Naive thymus-derived CD4-positive, alpha-beta T cell (primary cell): ENCODE measurements at regions of chr16 and their contacts with region 1.

Region 1: GRCh38 chr16:68229431-68230198 is 6.3 kb downstream of the ESRP2 start:
- DNase-seq: peak in 6 of 9 donors; percentile 44 to 64 (median 58)
- ATAC-seq: peak; percentile 61
- H3K4me3 ChIP-seq: no peak overlapping the region
- H3K4me3 Mint-ChIP-seq: peak overlapping the region in 1 of 10 donors; percentile 29
- H3K27ac ChIP-seq: no peak overlapping the region
- H3K27ac Mint-ChIP-seq: peak overlapping the region; percentile 63 to 90 (median 77)
- H3K4me1 ChIP-seq: peaks cover 0 to 21% of the 10 kb centered on the region in 2 donors
- H3K4me1 Mint-ChIP-seq: peaks cover 18 to 53% (median 47%) of the 10 kb centered on the region in 7 donors
- H3K27me3 ChIP-seq: no peaks in the 10 kb centered on the region
- H3K27me3 Mint-ChIP-seq: no peaks in the 10 kb centered on the region

Region 2: DNA sequence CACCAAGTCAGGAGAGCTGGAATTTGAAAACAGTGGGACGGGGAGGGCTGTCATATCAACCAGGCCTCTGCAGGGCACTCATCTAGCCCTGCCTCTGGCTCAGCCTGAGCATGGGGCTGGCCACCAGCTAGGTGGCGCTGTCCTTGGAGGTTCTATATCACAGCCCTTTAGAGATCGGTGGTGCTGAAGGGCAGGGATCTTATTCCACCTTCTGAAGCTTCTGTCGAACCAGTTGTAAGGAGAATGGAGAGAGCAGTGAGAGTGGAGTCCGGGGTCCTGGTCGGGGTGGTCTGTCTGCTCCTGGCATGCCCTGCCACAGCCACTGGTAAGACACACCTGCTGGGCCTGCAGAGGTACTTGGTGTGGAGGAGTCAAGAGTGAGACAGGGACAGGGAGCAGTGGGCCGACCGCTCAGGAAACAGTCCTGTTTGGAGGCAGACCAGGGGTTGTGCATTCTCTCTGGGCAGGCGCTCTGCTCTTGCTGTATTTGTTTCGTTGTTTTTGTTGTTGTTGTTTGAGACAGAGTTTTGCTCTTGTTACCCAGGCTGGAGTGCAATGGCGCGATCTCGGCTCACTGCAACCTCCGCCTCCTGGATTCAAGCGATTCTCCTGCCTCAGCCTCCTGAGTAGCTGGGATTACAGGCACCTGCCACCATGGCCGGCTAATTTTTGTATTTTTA is 1268.4 kb before region 1 on chr16 and contains the start of gene CES3:
- CTCF ChIA-PET with region 1: no interaction called
- POLR2A ChIA-PET with region 1: no interaction called
- intact Hi-C with region 1: no loop called
- DNase-seq: peak in 8 of 9 donors; percentile 23 to 71 (median 34)
- ATAC-seq: peak; percentile 90
- H3K4me3 ChIP-seq: no peak within 1 kb of the TSS
- H3K4me3 Mint-ChIP-seq: peak within 1 kb of the TSS in 1 of 10 donors; percentile 92
- H3K27ac ChIP-seq: no peak within 1 kb of the TSS
- H3K27ac Mint-ChIP-seq: peak within 1 kb of the TSS in 2 of 9 donors; percentile 68 to 91
- H3K4me1 ChIP-seq: no peaks in the 10 kb centered on the region
- H3K4me1 Mint-ChIP-seq: peaks cover 10 to 33% (median 17%) of the 10 kb centered on the region in 7 donors
- H3K27me3 ChIP-seq: no peaks in the 10 kb centered on the region
- H3K27me3 Mint-ChIP-seq: peaks cover 0 to 5% (median 0%) of the 10 kb centered on the region in 5 donors
- total RNA-seq, gene CES3: 0.32 to 11.5 (median 0.77) TPM in 4 of 5 experiments, not detected in the other

Region 3: GRCh38 chr16:67406111-67406890 is 823.3 kb before region 1 on chr16:
- CTCF ChIA-PET with region 1: no interaction called
- POLR2A ChIA-PET with region 1: no interaction called
- intact Hi-C with region 1: no loop called
- DNase-seq: no peak
- ATAC-seq: no peak
- H3K4me3 ChIP-seq: no peak overlapping the region
- H3K4me3 Mint-ChIP-seq: no peak overlapping the region
- H3K27ac ChIP-seq: no peak overlapping the region
- H3K27ac Mint-ChIP-seq: no peak overlapping the region
- H3K4me1 ChIP-seq: no peaks in the 10 kb centered on the region
- H3K4me1 Mint-ChIP-seq: no peaks in the 10 kb centered on the region
- H3K27me3 ChIP-seq: no peaks in the 10 kb centered on the region
- H3K27me3 Mint-ChIP-seq: peaks cover 0 to 15% (median 8%) of the 10 kb centered on the region in 5 donors

Region 4: GRCh38 chr16:67926181-67926746 is 303.4 kb before region 1 on chr16:
- CTCF ChIA-PET with region 1: no interaction called
- POLR2A ChIA-PET with region 1: no interaction called
- intact Hi-C with region 1: no loop called
- DNase-seq: no peak
- ATAC-seq: no peak
- H3K4me3 ChIP-seq: no peak overlapping the region
- H3K4me3 Mint-ChIP-seq: peak overlapping the region in 2 of 10 donors; percentile 20 to 24
- H3K27ac ChIP-seq: no peak overlapping the region
- H3K27ac Mint-ChIP-seq: peak overlapping the region in 4 of 9 donors; percentile 14 to 86 (median 55)
- H3K4me1 ChIP-seq: no peaks in the 10 kb centered on the region
- H3K4me1 Mint-ChIP-seq: peaks cover 0 to 22% (median 12%) of the 10 kb centered on the region in 7 donors
- H3K27me3 ChIP-seq: no peaks in the 10 kb centered on the region
- H3K27me3 Mint-ChIP-seq: no peaks in the 10 kb centered on the region

Region 5: GRCh38 chr16:68040507-68041288 is 188.9 kb before region 1 on chr16:
- CTCF ChIA-PET with region 1: interaction called, 11 read pairs
- POLR2A ChIA-PET with region 1: no interaction called
- intact Hi-C with region 1: loop called in 1 of 2 experiments (anchors 1 kb)
- DNase-seq: peak; percentile 81 to 95 (median 87)
- ATAC-seq: peak; percentile 100
- H3K4me3 ChIP-seq: no peak overlapping the region
- H3K4me3 Mint-ChIP-seq: peak overlapping the region in 1 of 10 donors; percentile 9
- H3K27ac ChIP-seq: peak overlapping the region; percentile 26
- H3K27ac Mint-ChIP-seq: peak overlapping the region; percentile 28 to 87 (median 61)
- H3K4me1 ChIP-seq: peaks cover 4 to 5% of the 10 kb centered on the region in 2 donors
- H3K4me1 Mint-ChIP-seq: peaks cover 5 to 26% (median 18%) of the 10 kb centered on the region in 7 donors
- H3K27me3 ChIP-seq: no peaks in the 10 kb centered on the region
- H3K27me3 Mint-ChIP-seq: no peaks in the 10 kb centered on the region

Region 6: DNA sequence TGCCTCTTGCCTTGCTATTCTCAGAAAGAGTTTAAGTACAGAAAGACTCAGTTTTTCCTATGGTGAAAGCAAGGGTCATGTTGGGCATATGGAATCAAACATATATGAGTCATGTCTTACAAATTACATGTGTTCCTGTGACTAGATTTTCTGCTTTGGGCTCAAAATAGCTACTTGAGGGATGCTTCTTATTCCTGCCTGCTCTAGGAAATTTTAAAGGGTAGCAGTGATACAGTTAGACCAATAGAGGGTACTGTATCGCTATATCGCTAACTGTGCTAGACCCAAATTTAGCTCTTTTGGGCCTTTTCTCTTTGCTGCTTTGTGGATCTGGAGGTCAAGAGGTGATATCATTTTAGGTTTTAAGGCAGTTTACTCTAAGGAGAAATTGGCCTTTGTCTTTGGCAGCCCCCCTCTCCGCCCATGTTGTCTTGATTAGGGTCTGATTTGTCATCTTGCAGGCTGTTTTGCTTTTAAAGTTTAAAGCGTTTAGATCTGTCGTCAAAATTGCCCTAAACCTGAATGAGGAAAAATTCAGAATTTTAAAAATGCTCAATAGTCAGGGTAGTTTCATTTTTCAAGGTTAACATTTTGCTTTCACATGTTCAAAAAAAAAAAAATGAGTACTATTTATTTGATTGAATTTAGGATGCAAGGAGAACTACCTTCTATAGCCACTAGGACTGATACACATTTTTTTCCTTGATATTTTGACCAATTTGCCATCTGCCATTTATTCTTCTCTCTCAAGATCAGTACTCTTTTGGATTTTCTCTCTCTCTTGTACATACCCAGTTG is 135.6 kb before region 1 on chr16:
- CTCF ChIA-PET with region 1: interaction called, 30 read pairs
- POLR2A ChIA-PET with region 1: interaction called, 3 read pairs
- intact Hi-C with region 1: loop called (anchors 1 kb)
- DNase-seq: peak in 7 of 9 donors; percentile 30 to 57 (median 40)
- ATAC-seq: peak; percentile 89
- H3K4me3 ChIP-seq: no peak overlapping the region
- H3K4me3 Mint-ChIP-seq: peak overlapping the region; percentile 28 to 72 (median 58)
- H3K27ac ChIP-seq: peak overlapping the region; percentile 17
- H3K27ac Mint-ChIP-seq: peak overlapping the region; percentile 56 to 92 (median 83)
- H3K4me1 ChIP-seq: peaks cover 74 to 81% of the 10 kb centered on the region in 2 donors
- H3K4me1 Mint-ChIP-seq: peaks cover 64 to 97% (median 84%) of the 10 kb centered on the region in 7 donors
- H3K27me3 ChIP-seq: no peaks in the 10 kb centered on the region
- H3K27me3 Mint-ChIP-seq: no peaks in the 10 kb centered on the region

Region 7: GRCh38 chr16:68190736-68191510 is 38.7 kb before region 1 on chr16:
- CTCF ChIA-PET with region 1: interaction called, 4 read pairs
- POLR2A ChIA-PET with region 1: interaction called, 3 read pairs
- intact Hi-C with region 1: loop called in 1 of 2 experiments (anchors 5 kb)
- DNase-seq: no peak
- ATAC-seq: no peak
- H3K4me3 ChIP-seq: no peak overlapping the region
- H3K4me3 Mint-ChIP-seq: no peak overlapping the region
- H3K27ac ChIP-seq: no peak overlapping the region
- H3K27ac Mint-ChIP-seq: peak overlapping the region in 7 of 9 donors; percentile 17 to 81 (median 52)
- H3K4me1 ChIP-seq: no peaks in the 10 kb centered on the region
- H3K4me1 Mint-ChIP-seq: peaks cover 0 to 35% (median 13%) of the 10 kb centered on the region in 7 donors
- H3K27me3 ChIP-seq: no peaks in the 10 kb centered on the region
- H3K27me3 Mint-ChIP-seq: no peaks in the 10 kb centered on the region